ENCODE measurements at regions of chr11 and their contacts with region 1.

Region 1: GRCh38 chr11:57324886-57325734 is at the start of gene TNKS1BP1:
- DNase-seq: peak; percentile 94
- ATAC-seq: peak; percentile 88
- H3K4me3 Mint-ChIP-seq: peak within 1 kb of the TSS; percentile 82
- H3K27ac Mint-ChIP-seq: peak within 1 kb of the TSS; percentile 98
- H3K4me1 Mint-ChIP-seq: peaks cover 58% of the 10 kb centered on the region
- H3K27me3 Mint-ChIP-seq: no peaks in the 10 kb centered on the region
- total RNA-seq, gene TNKS1BP1: 19.1 to 21.6 TPM

Region 2: DNA sequence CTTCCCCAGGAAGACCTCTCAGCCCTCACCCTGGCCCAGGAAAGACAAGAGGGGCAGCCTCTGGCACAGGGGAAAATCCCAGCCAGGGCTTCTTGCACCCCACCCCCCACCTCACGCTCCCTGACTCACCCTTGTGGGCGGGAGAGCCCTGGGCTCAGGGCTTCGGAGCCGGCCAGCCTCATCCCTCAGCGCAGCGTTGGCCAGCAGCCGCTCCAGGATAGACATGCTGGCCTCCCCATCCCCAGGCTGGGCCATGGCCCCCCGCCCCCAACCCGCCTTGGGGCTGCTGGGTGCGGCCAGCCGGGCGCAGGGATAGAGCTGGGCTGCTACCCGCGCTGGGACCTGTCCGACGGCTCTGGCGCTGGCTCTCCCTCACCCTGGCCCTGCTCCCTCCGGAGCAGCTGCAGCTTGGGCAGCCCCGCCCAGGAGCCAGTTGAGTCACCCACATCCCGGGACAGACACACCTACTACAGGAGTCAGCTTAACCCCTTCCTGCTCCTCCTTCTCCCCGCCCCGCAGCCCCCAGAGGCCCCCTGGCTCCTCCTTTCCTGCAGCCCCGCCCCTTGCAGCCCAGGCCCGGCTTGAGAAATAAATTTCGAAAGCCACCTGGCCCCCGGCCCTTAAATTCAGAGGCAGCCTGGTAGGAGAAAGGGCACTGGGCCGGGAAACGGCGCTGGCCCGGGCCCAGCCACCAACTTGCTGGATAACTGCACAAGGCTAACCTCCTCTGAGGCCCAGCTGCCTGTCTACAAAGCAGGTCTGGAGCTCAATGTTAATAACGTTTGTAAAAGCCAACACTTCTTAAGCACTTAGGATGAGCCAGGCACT is 13.8 kb before region 1 on chr11:
- CTCF ChIA-PET with region 1: interaction called, 3 read pairs
- POLR2A ChIA-PET with region 1: interaction called, 4 read pairs
- intact Hi-C with region 1: loop called (anchors 1 kb)
- DNase-seq: peak; percentile 89
- ATAC-seq: peak; percentile 99
- H3K4me3 Mint-ChIP-seq: peak overlapping the region; percentile 4
- H3K27ac Mint-ChIP-seq: no peak overlapping the region
- H3K4me1 Mint-ChIP-seq: peaks cover 7% of the 10 kb centered on the region
- H3K27me3 Mint-ChIP-seq: no peaks in the 10 kb centered on the region

Measured in activated CD4-positive, alpha-beta T cell treated with anti-CD3 and anti-CD28 coated beads for 36 hours (primary cell).